A549 (cell line): ENCODE measurements at regions of chr15 and their contacts with region 1.

Region 1: DNA sequence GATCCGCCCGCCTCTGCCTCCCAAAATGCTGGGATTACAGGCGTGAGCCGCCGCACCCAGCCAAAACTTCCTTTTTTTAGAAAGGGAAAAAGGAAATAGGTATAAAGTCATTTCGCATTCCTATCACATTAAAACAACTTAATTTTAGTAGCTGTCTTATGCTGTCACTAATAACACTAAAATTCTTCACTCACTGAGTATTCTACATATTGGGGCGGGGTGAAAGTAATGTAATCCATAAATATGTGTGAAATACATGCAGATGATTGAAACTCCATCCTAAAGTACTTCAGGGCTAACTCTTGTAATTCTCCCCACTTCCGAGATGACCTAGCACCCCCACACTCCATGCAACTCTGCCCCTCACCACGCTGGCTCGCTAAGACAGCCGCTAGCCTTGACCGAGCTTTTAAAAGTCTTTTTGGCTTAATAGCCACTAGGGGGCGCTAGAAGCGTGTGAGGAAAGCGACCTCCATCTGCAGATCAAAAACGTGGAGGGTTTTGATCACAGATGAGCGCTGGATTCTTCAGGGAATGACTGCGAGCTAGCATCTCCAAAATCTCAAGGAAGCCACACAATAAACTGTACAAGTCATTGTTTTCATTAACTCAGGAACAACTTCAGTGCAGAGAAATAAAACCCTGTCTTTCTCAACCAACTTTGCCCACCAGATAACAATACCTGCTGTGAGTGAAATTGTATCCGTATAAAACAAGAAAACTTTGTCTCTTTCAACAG is 129.3 kb upstream of the IGF1R start:
- DNase-seq: peak; percentile 85 to 86
- ATAC-seq: peak; percentile 89 to 96
- H3K4me3 ChIP-seq: no peak overlapping the region
- H3K27ac ChIP-seq: peak overlapping the region; percentile 3 to 50; a peak in 2 of 6 replicates
- H3K4me1 ChIP-seq: no peaks in the 10 kb centered on the region
- CTCF ChIP-seq: peak; percentile 91
- EP300 ChIP-seq: no peak
- POLR2A ChIP-seq: no peak
- RAD21 ChIP-seq: peak; percentile 91 to 93

Region 2: DNA sequence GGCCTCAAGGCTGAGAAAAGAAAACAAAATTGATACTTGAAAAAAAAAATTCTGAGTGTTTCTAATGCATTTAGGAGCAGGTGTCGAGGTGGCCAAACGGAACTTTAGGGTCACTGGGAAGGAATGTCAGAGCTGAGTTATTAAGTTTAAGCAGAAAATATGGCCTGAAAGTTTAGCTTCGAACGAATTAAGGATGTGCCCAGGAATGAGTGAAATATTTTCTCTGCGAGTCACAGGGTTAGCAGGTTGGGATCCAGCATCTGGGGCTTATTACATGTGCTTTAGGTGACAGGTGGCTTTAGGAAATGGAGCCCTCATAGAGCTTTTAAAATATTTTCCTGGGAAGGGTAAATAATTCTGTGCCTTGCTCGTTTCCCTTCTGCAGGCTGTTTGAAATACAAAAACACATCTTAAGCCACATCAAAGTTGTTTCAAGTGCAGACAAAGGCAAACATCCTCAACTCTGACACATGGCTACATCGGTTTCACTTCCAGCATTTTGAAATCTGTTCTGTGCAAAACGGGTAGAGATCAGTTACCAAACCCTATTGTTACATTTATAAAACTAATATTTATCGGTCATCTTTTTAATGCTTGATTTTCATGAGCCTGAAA is 701.6 kb before region 1 on chr15:
- CTCF ChIA-PET with region 1: no interaction called
- POLR2A ChIA-PET with region 1: no interaction called
- DNase-seq: no peak
- ATAC-seq: no peak
- H3K4me3 ChIP-seq: no peak overlapping the region
- H3K27ac ChIP-seq: no peak overlapping the region
- H3K4me1 ChIP-seq: no peaks in the 10 kb centered on the region
- CTCF ChIP-seq: no peak
- EP300 ChIP-seq: no peak
- POLR2A ChIP-seq: no peak
- RAD21 ChIP-seq: no peak

Region 3: DNA sequence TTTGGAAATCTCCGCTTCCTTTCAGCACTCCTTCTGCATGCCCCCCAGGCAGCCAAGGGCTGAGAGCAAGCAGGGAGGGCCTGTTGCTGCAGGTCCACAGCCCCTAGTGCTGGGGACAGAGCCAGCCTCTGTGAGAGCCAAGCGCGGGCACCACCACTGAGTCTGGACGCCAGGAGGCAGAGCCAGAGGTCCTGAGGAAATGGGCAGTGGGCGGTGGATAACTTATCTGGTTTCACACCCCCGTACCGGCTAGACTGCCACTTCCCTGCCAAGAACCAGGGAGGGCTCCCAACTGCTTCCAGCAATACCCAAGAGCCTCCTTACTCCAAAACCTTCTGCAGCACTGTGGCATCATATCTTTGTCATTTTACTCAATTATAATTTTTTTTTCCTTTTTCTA is 12.3 kb before region 1 on chr15:
- CTCF ChIA-PET with region 1: interaction called, 28 read pairs
- POLR2A ChIA-PET with region 1: no interaction called
- DNase-seq: no peak
- ATAC-seq: no peak
- H3K4me3 ChIP-seq: no peak overlapping the region
- H3K27ac ChIP-seq: no peak overlapping the region
- H3K4me1 ChIP-seq: 0 out of 3 replicates have a peak, but pooled peaks cover 2% of the 10 kb centered on the region
- CTCF ChIP-seq: no peak
- EP300 ChIP-seq: no peak
- POLR2A ChIP-seq: no peak
- RAD21 ChIP-seq: no peak

Region 4: GRCh38 chr15:98548154-98548971 is 29.4 kb after region 1 on chr15:
- CTCF ChIA-PET with region 1: interaction called, 19 read pairs
- POLR2A ChIA-PET with region 1: no interaction called
- DNase-seq: peak; percentile 72 to 84
- ATAC-seq: peak; percentile 89 to 91
- H3K4me3 ChIP-seq: peak overlapping the region; percentile 60
- H3K27ac ChIP-seq: peak overlapping the region; percentile 65 to 79
- H3K4me1 ChIP-seq: peaks cover 7% of the 10 kb centered on the region; the same call in 2 of the 3 replicates
- CTCF ChIP-seq: peak; percentile 27
- EP300 ChIP-seq: no peak
- POLR2A ChIP-seq: no peak; the same call in 1 of the 2 replicates
- RAD21 ChIP-seq: peak in 1 of 2 experiments; percentile 3; a peak in 1 of 5 replicates

Region 5: DNA sequence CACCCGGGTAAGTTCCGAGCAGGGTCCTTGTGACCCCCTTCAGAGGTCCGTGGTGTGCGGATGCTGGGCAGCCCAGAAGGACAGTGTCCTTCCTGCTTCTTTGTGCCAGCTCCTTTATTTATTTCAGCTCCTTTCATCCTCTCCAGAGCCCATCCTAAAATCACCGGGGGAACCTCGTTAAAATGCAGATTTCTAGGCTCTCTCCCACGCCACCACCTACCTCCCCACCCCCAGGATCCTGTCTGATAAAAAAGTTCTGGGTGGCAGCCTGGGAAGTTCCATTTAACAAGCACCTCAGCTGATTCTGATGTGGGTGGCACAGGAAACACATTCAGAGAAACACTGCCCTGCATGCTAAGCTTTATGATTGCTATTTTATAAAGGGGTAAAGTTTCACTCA is 116.9 kb after region 1 on chr15:
- CTCF ChIA-PET with region 1: interaction called, 19 read pairs
- POLR2A ChIA-PET with region 1: interaction called, 6 read pairs
- DNase-seq: no peak
- ATAC-seq: no peak
- H3K4me3 ChIP-seq: no peak overlapping the region
- H3K27ac ChIP-seq: no peak overlapping the region
- H3K4me1 ChIP-seq: no peaks in the 10 kb centered on the region
- CTCF ChIP-seq: no peak
- EP300 ChIP-seq: no peak
- POLR2A ChIP-seq: no peak
- RAD21 ChIP-seq: no peak

Region 6: GRCh38 chr15:98734466-98735199 is 215.6 kb after region 1 on chr15:
- CTCF ChIA-PET with region 1: no interaction called
- POLR2A ChIA-PET with region 1: no interaction called
- DNase-seq: no peak
- ATAC-seq: no peak
- H3K4me3 ChIP-seq: no peak overlapping the region
- H3K27ac ChIP-seq: peak overlapping the region in 1 of 2 experiments; percentile 30; a peak in 3 of 6 replicates
- H3K4me1 ChIP-seq: peaks cover 79% of the 10 kb centered on the region
- CTCF ChIP-seq: no peak
- EP300 ChIP-seq: no peak
- POLR2A ChIP-seq: no peak
- RAD21 ChIP-seq: no peak

Region 7: DNA sequence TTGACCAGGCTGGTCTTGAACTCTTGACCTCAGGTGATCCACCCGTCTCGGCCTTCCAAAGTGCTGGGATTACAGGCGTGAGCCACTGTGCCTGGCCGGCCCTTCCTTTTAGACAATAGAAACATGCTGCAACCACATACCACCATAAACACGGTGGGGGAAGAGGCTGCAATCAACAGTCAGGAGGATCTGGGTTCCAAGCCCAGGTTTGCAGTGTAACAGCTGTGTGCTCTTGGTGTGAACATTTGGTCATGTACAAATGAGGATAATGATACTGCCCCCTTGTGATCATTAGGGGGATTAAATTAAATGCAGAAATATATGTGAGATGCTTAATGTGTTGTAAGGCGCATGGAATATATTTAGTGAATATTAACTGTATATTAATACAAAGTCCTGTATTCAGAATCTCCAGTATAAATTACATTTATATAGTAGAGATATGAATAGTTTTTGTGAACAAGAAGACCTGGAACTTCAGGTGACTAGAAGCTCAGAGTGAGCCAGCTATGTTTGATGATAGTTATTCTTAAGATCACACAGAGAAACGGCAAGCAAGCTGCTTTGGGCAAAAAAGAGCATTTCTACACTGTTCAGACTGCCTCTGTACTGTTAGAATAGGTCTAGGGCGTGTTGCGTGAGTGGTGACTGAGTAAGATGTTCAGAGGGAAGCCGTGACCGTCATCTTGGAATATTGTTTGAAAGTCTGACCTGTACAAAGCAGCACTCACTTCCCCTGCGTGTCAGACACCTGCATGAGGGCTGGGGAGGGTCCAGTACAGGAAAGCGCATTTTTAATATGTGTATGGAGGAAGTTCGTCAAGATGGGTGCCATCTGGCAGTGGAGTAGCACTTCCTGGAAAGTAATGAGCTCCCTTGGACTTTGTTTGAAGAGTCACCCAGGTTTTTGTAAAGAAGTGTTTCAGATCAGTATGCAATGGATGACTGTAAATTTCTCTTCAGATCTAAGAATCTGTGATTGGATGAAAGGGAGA is 362.8 kb after region 1 on chr15:
- CTCF ChIA-PET with region 1: interaction called, 11 read pairs
- POLR2A ChIA-PET with region 1: no interaction called
- DNase-seq: peak in 1 of 2 experiments; percentile 84
- ATAC-seq: peak; percentile 33 to 51; a peak in 3 of 6 replicates
- H3K4me3 ChIP-seq: no peak overlapping the region
- H3K27ac ChIP-seq: peak overlapping the region; percentile 95 to 97
- H3K4me1 ChIP-seq: peaks cover 96% of the 10 kb centered on the region
- CTCF ChIP-seq: peak; percentile 57
- EP300 ChIP-seq: no peak
- POLR2A ChIP-seq: no peak
- RAD21 ChIP-seq: peak; percentile 69 to 72

Region 8: GRCh38 chr15:99076552-99077308 is 557.7 kb after region 1 on chr15:
- CTCF ChIA-PET with region 1: interaction called, 90 read pairs
- POLR2A ChIA-PET with region 1: no interaction called
- DNase-seq: peak; percentile 80 to 91
- ATAC-seq: peak; percentile 94 to 95
- H3K4me3 ChIP-seq: peak overlapping the region; percentile 8; the same call in 2 of the 3 replicates
- H3K27ac ChIP-seq: peak overlapping the region; percentile 66 to 79
- H3K4me1 ChIP-seq: peaks cover 11% of the 10 kb centered on the region
- CTCF ChIP-seq: peak; percentile 97
- EP300 ChIP-seq: no peak
- POLR2A ChIP-seq: no peak
- RAD21 ChIP-seq: peak; percentile 98 to 100